Activated naive CD4-positive, alpha-beta T cell treated with anti-CD3 and anti-CD28 coated beads, Interleukin-2, amount 10 ng/mL, durations not matched to agents 7 days and 5 days (primary cell): ENCODE measurements at regions of chr9 and their contacts with region 1.

Region 1: GRCh38 chr9:84397151-84397728 is 56.7 kb upstream of the SLC28A3 start:
- DNase-seq: peak; percentile 73
- H3K4me3 Mint-ChIP-seq: no peak overlapping the region
- H3K27ac Mint-ChIP-seq: no peak overlapping the region
- H3K4me1 Mint-ChIP-seq: no peaks in the 10 kb centered on the region
- H3K27me3 Mint-ChIP-seq: peaks cover 4% of the 10 kb centered on the region

Region 2: DNA sequence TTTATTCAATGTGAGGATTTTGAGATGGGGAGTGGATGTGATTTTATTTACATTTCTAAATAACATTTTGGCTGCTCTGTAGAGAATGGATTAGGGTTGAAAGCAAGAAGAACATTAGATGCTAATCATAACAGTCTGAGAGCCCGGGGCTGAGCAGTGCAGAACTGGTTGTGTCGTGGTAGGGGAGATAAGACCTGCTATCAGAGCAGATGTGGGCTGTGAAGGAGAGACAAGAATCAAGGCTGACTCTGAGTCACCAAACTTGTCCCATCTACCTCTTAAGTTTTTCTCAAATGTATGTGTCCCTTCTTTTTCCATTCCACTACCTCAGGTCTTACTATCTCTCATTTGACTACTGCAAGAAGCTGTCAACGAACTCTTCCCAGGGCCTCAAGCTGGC is 21.3 kb before region 1 on chr9:
- CTCF ChIA-PET with region 1: no interaction called
- DNase-seq: no peak
- H3K4me3 Mint-ChIP-seq: no peak overlapping the region
- H3K27ac Mint-ChIP-seq: no peak overlapping the region
- H3K4me1 Mint-ChIP-seq: no peaks in the 10 kb centered on the region
- H3K27me3 Mint-ChIP-seq: peaks cover 20% of the 10 kb centered on the region

Region 3: DNA sequence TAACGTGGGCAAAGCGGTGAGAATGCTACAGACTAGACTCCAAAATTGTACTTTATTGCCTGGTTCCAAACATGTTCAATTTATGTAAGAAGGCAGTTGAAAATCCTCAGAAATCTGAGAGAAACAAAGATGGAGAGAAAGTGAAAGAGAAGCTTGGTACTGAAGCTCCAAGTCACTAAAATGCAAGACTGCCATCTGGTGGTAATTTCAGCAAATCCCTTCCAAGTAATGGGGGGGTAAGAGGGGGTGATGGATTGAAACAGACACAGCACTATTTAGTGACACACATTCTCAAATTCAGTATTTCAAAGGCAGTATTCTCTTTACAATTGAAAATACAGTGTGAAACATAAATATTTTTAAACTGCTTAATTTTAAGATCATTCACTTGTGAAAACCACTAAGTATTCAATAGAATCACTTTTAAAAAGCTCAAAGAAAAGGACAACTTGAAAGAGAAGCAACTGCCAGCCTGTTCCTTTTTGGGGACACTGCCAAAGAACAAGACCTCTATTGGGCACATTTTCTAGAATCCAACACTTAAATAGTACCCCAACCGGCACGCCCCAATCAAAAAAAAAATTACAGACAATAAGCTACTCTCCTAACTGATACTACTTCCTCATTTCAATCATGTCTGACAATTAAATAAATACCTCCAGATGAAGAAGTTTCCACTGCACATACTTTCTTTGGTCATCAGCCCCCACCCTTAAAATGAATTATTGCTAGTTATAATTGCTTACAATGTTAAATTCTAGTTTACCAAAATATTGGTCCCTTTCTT is 1213.0 kb after region 1 on chr9:
- CTCF ChIA-PET with region 1: interaction called, 11 read pairs
- DNase-seq: peak; percentile 51
- H3K4me3 Mint-ChIP-seq: no peak overlapping the region
- H3K27ac Mint-ChIP-seq: no peak overlapping the region
- H3K4me1 Mint-ChIP-seq: peaks cover 5% of the 10 kb centered on the region
- H3K27me3 Mint-ChIP-seq: no peaks in the 10 kb centered on the region